Activated CD4-positive, alpha-beta memory T cell treated with anti-CD3 and anti-CD28 coated beads for 36 hours (primary cell): ENCODE measurements at regions of chr16 and their contacts with region 1.

Region 1: DNA sequence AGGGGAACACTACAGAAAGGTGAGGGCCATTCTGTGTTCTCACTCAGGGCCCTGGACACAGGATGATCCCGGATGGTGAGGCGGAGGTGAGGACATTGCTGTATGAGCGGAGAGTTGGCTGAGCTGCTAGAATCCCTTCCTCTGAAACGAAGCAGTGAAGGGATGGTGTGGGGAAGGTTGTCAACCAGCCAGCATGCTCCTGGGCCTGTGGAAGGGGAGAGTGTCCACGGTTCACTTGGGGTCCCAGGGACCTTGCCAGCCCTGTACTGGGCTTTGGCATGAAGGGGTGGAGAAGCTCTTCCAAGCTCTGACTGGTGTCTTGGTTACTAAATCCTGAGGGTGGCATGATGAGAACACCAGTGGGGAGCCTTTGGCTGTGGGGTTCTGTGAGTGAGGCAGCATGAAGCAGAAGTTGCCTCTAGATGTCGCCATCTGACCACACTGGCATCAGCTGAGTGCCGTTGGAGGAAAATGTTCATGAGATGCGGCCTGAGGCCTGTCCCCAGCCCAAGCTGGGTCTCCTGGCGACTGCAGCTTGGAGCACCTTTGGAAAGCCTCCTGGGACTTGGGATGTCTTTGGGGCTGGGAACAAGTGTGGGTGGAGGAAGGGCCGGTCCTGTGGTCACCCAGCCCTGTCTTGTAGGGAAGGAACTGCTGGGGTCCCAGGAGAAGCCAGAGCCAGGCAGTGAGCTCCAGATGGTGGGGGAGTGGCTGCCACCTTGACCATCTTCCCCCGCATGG is 14.8 kb downstream of the PDP2 start:
- DNase-seq: peak; percentile 75
- H3K4me3 Mint-ChIP-seq: no peak overlapping the region
- H3K27ac Mint-ChIP-seq: no peak overlapping the region
- H3K4me1 Mint-ChIP-seq: peaks cover 8% of the 10 kb centered on the region
- H3K27me3 Mint-ChIP-seq: no peaks in the 10 kb centered on the region

Region 2: GRCh38 chr16:66880288-66881013 is 14.7 kb before region 1 on chr16 and contains the start of gene PDP2:
- CTCF ChIA-PET with region 1: interaction called, 15 read pairs
- POLR2A ChIA-PET with region 1: interaction called, 4 read pairs
- intact Hi-C with region 1: no loop called
- DNase-seq: peak; percentile 95
- H3K4me3 Mint-ChIP-seq: peak within 1 kb of the TSS; percentile 94
- H3K27ac Mint-ChIP-seq: peak within 1 kb of the TSS; percentile 84
- H3K4me1 Mint-ChIP-seq: peaks cover 50% of the 10 kb centered on the region
- H3K27me3 Mint-ChIP-seq: no peaks in the 10 kb centered on the region
- total RNA-seq, gene PDP2: 42.4 to 45.5 TPM

Region 3: GRCh38 chr16:66905633-66906539 is 10.8 kb after region 1 on chr16:
- CTCF ChIA-PET with region 1: interaction called, 18 read pairs
- POLR2A ChIA-PET with region 1: interaction called, 3 read pairs
- intact Hi-C with region 1: no loop called
- DNase-seq: peak; percentile 66
- H3K4me3 Mint-ChIP-seq: no peak overlapping the region
- H3K27ac Mint-ChIP-seq: no peak overlapping the region
- H3K4me1 Mint-ChIP-seq: peaks cover 6% of the 10 kb centered on the region
- H3K27me3 Mint-ChIP-seq: no peaks in the 10 kb centered on the region

Region 4: GRCh38 chr16:66911112-66911511 is 16.0 kb after region 1 on chr16:
- CTCF ChIA-PET with region 1: interaction called, 18 read pairs
- POLR2A ChIA-PET with region 1: no interaction called
- intact Hi-C with region 1: no loop called
- DNase-seq: no peak
- H3K4me3 Mint-ChIP-seq: no peak overlapping the region
- H3K27ac Mint-ChIP-seq: no peak overlapping the region
- H3K4me1 Mint-ChIP-seq: peaks cover 2% of the 10 kb centered on the region
- H3K27me3 Mint-ChIP-seq: peaks cover 1% of the 10 kb centered on the region

Region 5: GRCh38 chr16:66924527-66925321 is 29.6 kb after region 1 on chr16:
- CTCF ChIA-PET with region 1: interaction called, 33 read pairs
- POLR2A ChIA-PET with region 1: interaction called, 5 read pairs
- intact Hi-C with region 1: loop called (anchors 2 kb)
- DNase-seq: peak; percentile 65
- H3K4me3 Mint-ChIP-seq: peak overlapping the region; percentile 20
- H3K27ac Mint-ChIP-seq: no peak overlapping the region
- H3K4me1 Mint-ChIP-seq: peaks cover 11% of the 10 kb centered on the region
- H3K27me3 Mint-ChIP-seq: peaks cover 30% of the 10 kb centered on the region

Region 6: GRCh38 chr16:66934153-66934838 is 39.2 kb after region 1 on chr16 and contains the start of gene CIAO2B:
- CTCF ChIA-PET with region 1: interaction called, 33 read pairs
- POLR2A ChIA-PET with region 1: interaction called, 3 read pairs
- intact Hi-C with region 1: loop called (anchors 2 kb)
- DNase-seq: peak; percentile 93
- H3K4me3 Mint-ChIP-seq: peak within 1 kb of the TSS; percentile 100
- H3K27ac Mint-ChIP-seq: peak within 1 kb of the TSS; percentile 97
- H3K4me1 Mint-ChIP-seq: peaks cover 49% of the 10 kb centered on the region
- H3K27me3 Mint-ChIP-seq: no peaks in the 10 kb centered on the region
- total RNA-seq, gene CIAO2B: 195 to 204 TPM

Region 7: GRCh38 chr16:66947302-66948065 is 52.4 kb after region 1 on chr16:
- CTCF ChIA-PET with region 1: interaction called, 3 read pairs
- POLR2A ChIA-PET with region 1: interaction called, 3 read pairs
- intact Hi-C with region 1: loop called (anchors 2 kb)
- DNase-seq: peak; percentile 91
- H3K4me3 Mint-ChIP-seq: peak overlapping the region; percentile 72
- H3K27ac Mint-ChIP-seq: no peak overlapping the region
- H3K4me1 Mint-ChIP-seq: peaks cover 19% of the 10 kb centered on the region
- H3K27me3 Mint-ChIP-seq: peaks cover 31% of the 10 kb centered on the region